SK-N-SH (cell line): ENCODE measurements at regions of chr7 and their contacts with region 1.

Region 1: GRCh38 chr7:74026903-74027551 is 946 bp upstream of the ELN start:
- DNase-seq: peak; percentile 92
- H3K4me3 ChIP-seq: no peak overlapping the region; a peak in 1 of 4 replicates
- H3K27ac ChIP-seq: peak overlapping the region; percentile 11 to 78; a peak in 2 of 4 replicates
- H3K4me1 ChIP-seq: peaks cover 22 to 85% of the 10 kb centered on the region in 2 experiments
- H3K27me3 ChIP-seq: no peaks in the 10 kb centered on the region
- CTCF ChIP-seq: peak; percentile 99
- EP300 ChIP-seq: peak in 1 of 2 experiments; percentile 64; a peak in 2 of 4 replicates
- RAD21 ChIP-seq: peak; percentile 92

Region 2: GRCh38 chr7:73811760-73812168 is 215.3 kb before region 1 on chr7:
- CTCF ChIA-PET with region 1: interaction called, 11 read pairs
- POLR2A ChIA-PET with region 1: no interaction called
- DNase-seq: peak; percentile 87
- H3K4me3 ChIP-seq: no peak overlapping the region; a peak in 1 of 4 replicates
- H3K27ac ChIP-seq: no peak overlapping the region
- H3K4me1 ChIP-seq: no peaks in the 10 kb centered on the region
- H3K27me3 ChIP-seq: no peaks in the 10 kb centered on the region
- CTCF ChIP-seq: peak; percentile 87
- EP300 ChIP-seq: no peak
- RAD21 ChIP-seq: peak; percentile 83

Region 3: GRCh38 chr7:73865738-73866445 is 161.1 kb before region 1 on chr7:
- CTCF ChIA-PET with region 1: interaction called, 57 read pairs
- POLR2A ChIA-PET with region 1: interaction called, 3 read pairs
- DNase-seq: peak; percentile 85
- H3K4me3 ChIP-seq: no peak overlapping the region
- H3K27ac ChIP-seq: peak overlapping the region in 1 of 2 experiments; percentile 91; a peak in 2 of 4 replicates
- H3K4me1 ChIP-seq: peaks cover 0 to 35% of the 10 kb centered on the region in 2 experiments; a peak in 1 of 4 replicates
- H3K27me3 ChIP-seq: no peaks in the 10 kb centered on the region
- CTCF ChIP-seq: peak; percentile 95
- EP300 ChIP-seq: peak in 1 of 2 experiments; percentile 62; a peak in 1 of 4 replicates
- RAD21 ChIP-seq: peak; percentile 96

Region 4: GRCh38 chr7:73885975-73886798 is 140.8 kb before region 1 on chr7:
- CTCF ChIA-PET with region 1: interaction called, 29 read pairs
- POLR2A ChIA-PET with region 1: no interaction called
- DNase-seq: peak; percentile 70
- H3K4me3 ChIP-seq: no peak overlapping the region
- H3K27ac ChIP-seq: peak overlapping the region in 1 of 2 experiments; percentile 37; a peak in 2 of 4 replicates
- H3K4me1 ChIP-seq: peaks cover 7 to 19% of the 10 kb centered on the region in 2 experiments; a peak in 2 of 4 replicates
- H3K27me3 ChIP-seq: no peaks in the 10 kb centered on the region
- CTCF ChIP-seq: no peak
- EP300 ChIP-seq: no peak
- RAD21 ChIP-seq: no peak

Region 5: DNA sequence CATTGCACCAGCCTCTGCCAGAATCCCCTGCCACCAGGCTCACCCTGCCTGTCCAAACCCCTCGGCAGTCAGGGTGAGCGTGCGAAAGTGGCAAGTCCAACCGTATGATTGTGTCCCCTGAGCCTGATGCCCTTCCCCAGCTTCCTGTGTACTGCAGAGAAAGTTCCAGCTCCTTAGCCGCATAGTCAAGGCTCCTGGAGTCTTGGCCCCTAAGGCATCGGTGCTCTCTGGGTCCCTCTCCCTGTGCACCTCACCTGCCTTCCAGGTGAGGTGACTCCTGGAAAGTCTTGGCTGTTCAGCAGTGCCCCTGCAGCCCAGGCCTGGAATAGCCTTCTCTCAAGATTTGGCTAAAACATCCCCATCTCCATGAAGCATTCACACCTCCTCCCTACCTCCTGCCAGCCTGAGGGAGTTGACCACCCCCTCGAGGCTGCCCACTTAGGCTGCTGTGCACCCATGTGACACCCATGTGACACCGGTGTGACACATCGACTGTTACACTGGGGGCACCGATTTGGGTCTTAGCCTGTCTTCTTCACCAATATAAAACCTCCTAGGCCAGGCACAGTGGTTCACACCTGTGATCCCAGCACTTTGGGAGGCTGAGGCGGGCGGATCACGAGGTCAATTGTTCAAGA is 55.2 kb before region 1 on chr7:
- CTCF ChIA-PET with region 1: interaction called, 25 read pairs
- POLR2A ChIA-PET with region 1: interaction called, 4 read pairs
- DNase-seq: peak; percentile 60
- H3K4me3 ChIP-seq: no peak overlapping the region
- H3K27ac ChIP-seq: peak overlapping the region in 1 of 2 experiments; percentile 76; a peak in 2 of 4 replicates
- H3K4me1 ChIP-seq: peaks cover 0 to 23% of the 10 kb centered on the region in 2 experiments; a peak in 1 of 4 replicates
- H3K27me3 ChIP-seq: no peaks in the 10 kb centered on the region
- CTCF ChIP-seq: no peak
- EP300 ChIP-seq: no peak
- RAD21 ChIP-seq: no peak

Region 6: GRCh38 chr7:74012842-74013249 is 14.2 kb before region 1 on chr7:
- CTCF ChIA-PET with region 1: interaction called, 48 read pairs
- POLR2A ChIA-PET with region 1: interaction called, 5 read pairs
- DNase-seq: peak; percentile 71
- H3K4me3 ChIP-seq: no peak overlapping the region
- H3K27ac ChIP-seq: peak overlapping the region in 1 of 2 experiments; percentile 36; a peak in 1 of 4 replicates
- H3K4me1 ChIP-seq: peaks cover 5 to 14% of the 10 kb centered on the region in 2 experiments; a peak in 2 of 4 replicates
- H3K27me3 ChIP-seq: no peaks in the 10 kb centered on the region
- CTCF ChIP-seq: no peak
- EP300 ChIP-seq: no peak
- RAD21 ChIP-seq: no peak

Region 7: DNA sequence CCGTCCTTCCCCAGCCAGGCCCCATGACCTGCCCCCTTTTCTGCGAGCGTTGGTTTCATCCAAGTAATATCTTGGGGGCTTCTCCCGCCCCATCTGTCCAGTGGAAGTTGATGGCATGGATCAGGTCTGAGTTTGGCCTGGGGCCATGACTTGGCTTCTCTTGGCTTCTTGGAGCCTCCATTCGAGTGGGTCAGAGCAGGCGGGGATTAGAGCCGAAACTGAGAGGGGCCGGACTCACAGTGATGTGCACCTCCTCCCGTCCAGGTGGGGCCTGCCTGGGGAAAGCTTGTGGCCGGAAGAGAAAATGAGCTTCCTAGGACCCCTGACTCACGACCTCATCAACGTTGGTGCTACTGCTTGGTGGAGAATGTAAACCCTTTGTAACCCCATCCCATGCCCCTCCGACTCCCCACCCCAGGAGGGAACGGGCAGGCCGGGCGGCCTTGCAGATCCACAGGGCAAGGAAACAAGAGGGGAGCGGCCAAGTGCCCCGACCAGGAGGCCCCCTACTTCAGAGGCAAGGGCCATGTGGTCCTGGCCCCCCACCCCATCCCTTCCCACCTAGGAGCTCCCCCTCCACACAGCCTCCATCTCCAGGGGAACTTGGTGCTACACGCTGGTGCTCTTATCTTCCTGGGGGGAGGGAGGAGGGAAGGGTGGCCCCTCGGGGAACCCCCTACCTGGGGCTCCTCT is 41.5 kb after region 1 on chr7:
- CTCF ChIA-PET with region 1: interaction called, 23 read pairs
- POLR2A ChIA-PET with region 1: no interaction called
- DNase-seq: no peak
- H3K4me3 ChIP-seq: no peak overlapping the region
- H3K27ac ChIP-seq: no peak overlapping the region
- H3K4me1 ChIP-seq: no peaks in the 10 kb centered on the region
- H3K27me3 ChIP-seq: no peaks in the 10 kb centered on the region
- CTCF ChIP-seq: no peak
- EP300 ChIP-seq: no peak
- RAD21 ChIP-seq: no peak

Region 8: GRCh38 chr7:74149603-74150002 is 122.6 kb after region 1 on chr7:
- CTCF ChIA-PET with region 1: no interaction called
- POLR2A ChIA-PET with region 1: no interaction called
- DNase-seq: no peak
- H3K4me3 ChIP-seq: no peak overlapping the region
- H3K27ac ChIP-seq: peak overlapping the region in 1 of 2 experiments; percentile 58; a peak in 2 of 4 replicates
- H3K4me1 ChIP-seq: peaks cover 0 to 2% of the 10 kb centered on the region in 2 experiments; a peak in 1 of 4 replicates
- H3K27me3 ChIP-seq: no peaks in the 10 kb centered on the region
- CTCF ChIP-seq: no peak
- EP300 ChIP-seq: no peak
- RAD21 ChIP-seq: no peak

Region 9: GRCh38 chr7:74242122-74242443 is 215.1 kb after region 1 on chr7:
- CTCF ChIA-PET with region 1: no interaction called
- POLR2A ChIA-PET with region 1: no interaction called
- DNase-seq: no peak
- H3K4me3 ChIP-seq: no peak overlapping the region
- H3K27ac ChIP-seq: no peak overlapping the region
- H3K4me1 ChIP-seq: no peaks in the 10 kb centered on the region
- H3K27me3 ChIP-seq: no peaks in the 10 kb centered on the region
- CTCF ChIP-seq: no peak
- EP300 ChIP-seq: no peak
- RAD21 ChIP-seq: no peak